Activated B cell treated with CpG ODN at 0.5 μM for 24 hours (primary cell): ENCODE measurements at regions of chr2 and their contacts with region 1.

Region 1: DNA sequence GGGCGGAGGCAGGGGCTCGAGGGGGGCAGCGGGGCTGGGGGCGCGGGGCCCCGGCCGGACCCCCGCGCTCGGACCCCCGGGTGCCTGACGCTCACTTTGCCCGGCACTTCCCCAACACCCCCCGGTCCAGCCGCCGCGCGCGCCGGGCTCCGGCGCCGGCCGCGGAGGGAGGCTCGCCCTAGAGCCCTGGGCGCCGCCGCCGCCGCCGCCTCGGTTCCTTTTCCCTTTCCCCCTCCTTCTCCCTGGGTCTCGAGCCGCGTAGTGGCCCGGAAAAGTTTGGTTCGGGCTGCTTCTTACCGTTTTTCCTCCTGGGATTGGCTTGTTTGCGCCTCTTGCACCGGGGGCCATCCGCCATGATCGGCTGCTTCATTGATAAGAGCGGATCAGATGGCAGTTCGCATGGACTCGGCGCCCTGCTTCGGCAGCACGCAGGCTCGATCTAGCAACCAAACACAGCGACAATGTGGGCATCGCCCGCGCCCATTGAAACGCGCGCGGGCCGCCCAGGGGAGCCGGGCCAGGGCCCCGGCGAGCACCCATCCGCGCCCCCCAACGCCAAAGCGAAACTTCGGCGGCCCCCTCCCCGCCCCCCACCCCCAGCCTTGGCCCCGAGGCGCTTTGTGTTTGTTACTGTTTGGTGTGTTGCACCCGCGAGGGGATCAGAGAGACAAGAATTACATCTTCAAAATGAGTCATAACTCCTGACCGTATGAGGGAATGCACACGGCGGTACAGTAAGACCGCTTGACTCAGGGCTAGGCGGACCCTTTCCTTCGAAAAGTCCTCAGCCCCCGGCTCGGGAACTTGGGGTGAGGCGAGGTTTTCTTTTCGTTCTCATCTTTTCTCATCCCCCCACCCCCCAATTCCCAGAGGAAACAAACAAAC is 2.7 kb downstream of the ZEB2 start:
- DNase-seq: peak; percentile 67
- ATAC-seq: peak; percentile 58
- H3K4me3 Mint-ChIP-seq: no peak overlapping the region
- H3K27ac Mint-ChIP-seq: no peak overlapping the region
- H3K4me1 Mint-ChIP-seq: peaks cover 47% of the 10 kb centered on the region
- H3K27me3 Mint-ChIP-seq: no peaks in the 10 kb centered on the region
- CTCF ChIP-seq: no peak

Region 2: DNA sequence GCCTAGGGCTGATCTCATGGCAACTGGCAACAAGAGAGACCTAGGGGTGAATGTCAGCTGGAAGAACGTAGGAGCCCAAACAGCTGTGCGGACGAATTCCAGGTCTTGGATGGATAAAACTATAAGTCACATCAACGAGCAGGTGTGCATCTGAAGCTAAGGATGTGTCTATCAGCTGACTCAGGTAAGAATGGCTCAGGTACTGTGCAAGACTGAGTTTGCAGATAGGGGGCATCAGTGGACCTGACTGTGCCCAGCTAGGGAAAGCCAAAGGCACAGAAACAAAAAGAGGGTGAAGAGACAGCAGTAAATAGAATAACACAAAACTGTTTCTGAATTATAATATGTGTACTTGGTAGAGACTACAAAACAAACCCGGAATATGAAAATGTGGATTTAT is 354.6 kb before region 1 on chr2:
- CTCF ChIA-PET with region 1: no interaction called
- POLR2A ChIA-PET with region 1: no interaction called
- intact Hi-C with region 1: loop called (anchors 2 kb)
- DNase-seq: no peak
- ATAC-seq: peak; percentile 56
- H3K4me3 Mint-ChIP-seq: no peak overlapping the region
- H3K27ac Mint-ChIP-seq: no peak overlapping the region
- H3K4me1 Mint-ChIP-seq: peaks cover 7% of the 10 kb centered on the region
- H3K27me3 Mint-ChIP-seq: no peaks in the 10 kb centered on the region
- CTCF ChIP-seq: no peak

Region 3: DNA sequence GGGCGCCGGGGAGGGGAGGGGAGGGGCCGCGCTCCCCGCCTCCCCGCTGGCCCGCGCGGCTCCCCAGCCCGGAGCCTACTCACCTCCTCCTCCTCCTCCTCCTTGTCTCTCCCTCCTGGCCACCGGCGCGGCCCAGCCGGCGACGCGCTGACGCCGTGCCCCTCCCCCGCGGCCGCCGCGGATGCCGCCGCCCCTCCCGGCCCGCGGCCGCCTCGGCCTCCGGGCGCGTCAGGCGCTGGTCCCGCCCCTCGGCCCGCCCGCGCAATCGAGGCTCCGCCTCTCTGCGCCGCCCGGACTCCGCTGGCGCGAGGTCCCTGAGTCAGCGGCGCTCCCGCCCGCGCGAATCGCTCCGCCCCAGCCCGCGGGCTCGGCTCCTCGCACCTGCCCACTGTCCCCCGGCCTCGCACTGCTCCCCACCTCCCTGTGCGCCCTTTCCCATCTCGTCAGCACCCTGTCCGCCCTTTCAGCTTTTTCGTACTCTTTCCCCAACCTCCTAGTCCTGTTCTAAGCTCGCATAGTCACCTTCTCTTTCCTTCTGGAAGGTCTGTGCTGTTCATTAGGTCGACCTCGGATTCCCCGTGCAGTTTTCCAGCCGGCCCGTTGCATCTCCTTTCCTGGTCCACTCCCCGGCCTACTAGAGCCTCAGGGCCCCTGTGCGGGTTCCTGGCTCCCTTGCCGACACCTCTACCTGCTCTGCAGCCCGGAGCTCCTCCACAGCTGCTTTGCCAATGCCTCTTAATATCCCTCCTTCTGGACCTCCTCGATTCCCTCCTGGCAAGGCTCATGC is 184.7 kb before region 1 on chr2:
- CTCF ChIA-PET with region 1: no interaction called
- POLR2A ChIA-PET with region 1: no interaction called
- intact Hi-C with region 1: loop called (anchors 1 kb)
- DNase-seq: peak; percentile 93
- ATAC-seq: peak; percentile 91
- H3K4me3 Mint-ChIP-seq: peak overlapping the region; percentile 92
- H3K27ac Mint-ChIP-seq: peak overlapping the region; percentile 87
- H3K4me1 Mint-ChIP-seq: peaks cover 22% of the 10 kb centered on the region
- H3K27me3 Mint-ChIP-seq: no peaks in the 10 kb centered on the region
- CTCF ChIP-seq: no peak

Region 4: DNA sequence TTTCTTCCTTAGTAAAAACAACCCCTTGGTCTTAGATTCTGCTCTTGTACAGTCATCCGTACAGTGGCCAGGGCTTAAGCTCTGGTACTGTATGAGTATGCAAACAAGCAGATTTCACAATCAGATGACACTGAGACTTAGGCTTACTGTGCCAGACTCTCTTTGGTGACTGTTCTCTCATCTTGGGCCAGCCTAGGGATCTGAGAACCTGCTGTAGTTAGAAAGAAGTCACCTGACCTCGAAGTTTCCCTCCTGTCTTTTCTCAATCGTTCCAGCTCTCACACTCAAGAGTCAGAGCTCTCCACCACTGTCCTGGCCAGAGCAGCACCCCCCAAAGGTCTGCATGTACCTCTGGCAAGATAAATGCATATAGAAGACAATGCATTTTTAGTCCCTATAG is 60.5 kb before region 1 on chr2:
- CTCF ChIA-PET with region 1: interaction called, 3 read pairs
- POLR2A ChIA-PET with region 1: interaction called, 11 read pairs
- intact Hi-C with region 1: loop called (anchors 2 kb)
- DNase-seq: no peak
- ATAC-seq: peak; percentile 90
- H3K4me3 Mint-ChIP-seq: peak overlapping the region; percentile 25
- H3K27ac Mint-ChIP-seq: peak overlapping the region; percentile 83
- H3K4me1 Mint-ChIP-seq: peaks cover 96% of the 10 kb centered on the region
- H3K27me3 Mint-ChIP-seq: no peaks in the 10 kb centered on the region
- CTCF ChIP-seq: no peak

Region 5: DNA sequence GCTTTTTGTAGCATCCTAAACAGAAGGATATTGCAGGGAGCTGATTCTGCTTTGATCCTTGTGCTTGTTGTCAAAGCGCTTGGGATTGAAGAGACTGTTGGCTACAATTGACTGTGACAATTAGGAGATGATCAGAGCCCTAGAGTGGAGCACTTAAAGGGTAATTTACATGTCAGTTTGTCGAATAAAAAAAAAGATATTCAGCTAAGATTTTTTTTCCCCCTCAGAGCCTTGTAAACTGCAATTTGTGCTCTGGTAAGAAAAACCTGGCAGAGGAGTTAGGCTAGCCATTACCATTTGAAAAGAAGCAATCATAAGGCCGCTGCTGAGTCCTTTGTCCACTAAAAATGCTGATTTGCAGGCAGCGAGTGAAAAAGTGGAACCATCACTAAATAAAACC is 50.5 kb after region 1 on chr2:
- CTCF ChIA-PET with region 1: no interaction called
- POLR2A ChIA-PET with region 1: interaction called, 3 read pairs
- intact Hi-C with region 1: loop called (anchors 2 kb)
- DNase-seq: no peak
- ATAC-seq: no peak
- H3K4me3 Mint-ChIP-seq: no peak overlapping the region
- H3K27ac Mint-ChIP-seq: no peak overlapping the region
- H3K4me1 Mint-ChIP-seq: peaks cover under 1% of the 10 kb centered on the region
- H3K27me3 Mint-ChIP-seq: peaks cover 3% of the 10 kb centered on the region
- CTCF ChIP-seq: no peak

Region 6: GRCh38 chr2:144703852-144704708 is 186.9 kb after region 1 on chr2:
- CTCF ChIA-PET with region 1: no interaction called
- POLR2A ChIA-PET with region 1: interaction called, 10 read pairs
- intact Hi-C with region 1: loop called (anchors 2 kb)
- DNase-seq: peak; percentile 27
- ATAC-seq: peak; percentile 81
- H3K4me3 Mint-ChIP-seq: peak overlapping the region; percentile 36
- H3K27ac Mint-ChIP-seq: peak overlapping the region; percentile 73
- H3K4me1 Mint-ChIP-seq: peaks cover 51% of the 10 kb centered on the region
- H3K27me3 Mint-ChIP-seq: no peaks in the 10 kb centered on the region
- CTCF ChIP-seq: no peak

Region 7: DNA sequence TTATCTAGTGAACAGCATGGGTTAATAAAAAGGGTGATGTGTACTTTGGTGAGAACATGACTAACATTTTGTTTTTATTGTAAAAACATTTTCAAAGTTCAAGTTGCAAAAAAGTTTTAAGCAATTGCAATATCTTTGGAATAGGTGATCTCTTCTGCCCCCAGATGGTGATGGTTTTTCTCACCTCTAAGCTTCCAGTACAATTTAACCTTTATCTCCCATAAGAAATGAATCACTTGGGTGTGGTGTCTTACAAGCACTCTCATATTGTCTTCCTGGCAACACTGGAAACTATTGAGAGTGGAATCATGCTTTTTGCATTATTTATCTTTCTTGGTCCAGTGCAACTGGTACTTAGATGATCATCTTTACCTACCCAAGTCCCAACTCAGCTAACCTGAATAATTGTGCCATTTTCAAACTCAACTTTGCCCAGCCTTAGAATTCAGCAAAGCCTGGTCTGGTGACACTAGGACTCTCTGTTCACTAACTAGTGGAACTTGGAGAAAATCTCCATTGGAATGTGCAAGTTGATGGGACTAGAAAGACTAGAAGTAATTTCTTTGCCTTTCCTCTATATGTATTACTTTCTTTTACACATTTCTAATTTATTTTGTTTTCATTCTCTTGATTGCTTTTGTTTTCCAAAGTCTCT is 967.3 kb after region 1 on chr2:
- CTCF ChIA-PET with region 1: no interaction called
- POLR2A ChIA-PET with region 1: no interaction called
- intact Hi-C with region 1: no loop called
- DNase-seq: no peak
- ATAC-seq: peak; percentile 31
- H3K4me3 Mint-ChIP-seq: no peak overlapping the region
- H3K27ac Mint-ChIP-seq: no peak overlapping the region
- H3K4me1 Mint-ChIP-seq: peaks cover 7% of the 10 kb centered on the region
- H3K27me3 Mint-ChIP-seq: no peaks in the 10 kb centered on the region
- CTCF ChIP-seq: no peak

Region 8: GRCh38 chr2:145593832-145594614 is 1076.8 kb after region 1 on chr2:
- CTCF ChIA-PET with region 1: no interaction called
- POLR2A ChIA-PET with region 1: no interaction called
- intact Hi-C with region 1: loop called (anchors 5 kb)
- DNase-seq: no peak
- ATAC-seq: no peak
- H3K4me3 Mint-ChIP-seq: peak overlapping the region; percentile 6
- H3K27ac Mint-ChIP-seq: peak overlapping the region; percentile 83
- H3K4me1 Mint-ChIP-seq: peaks cover 74% of the 10 kb centered on the region
- H3K27me3 Mint-ChIP-seq: no peaks in the 10 kb centered on the region
- CTCF ChIP-seq: no peak